Mammary epithelial cell (primary cell): ENCODE measurements at regions of chr10 and their contacts with region 1.

Region 1: GRCh38 chr10:22003079-22003913 is at the start of gene DNAJC1:
- DNase-seq: peak; percentile 92
- H3K4me3 ChIP-seq: peak within 1 kb of the TSS; percentile 70 to 96 (median 92)
- H3K27ac ChIP-seq: peak within 1 kb of the TSS; percentile 87
- H3K4me1 ChIP-seq: peaks cover 6% of the 10 kb centered on the region
- H3K27me3 ChIP-seq: peaks cover 3% of the 10 kb centered on the region
- CTCF ChIP-seq: no peak
- total RNA-seq, gene DNAJC1: 33.0 to 56.5 TPM

Region 2: DNA sequence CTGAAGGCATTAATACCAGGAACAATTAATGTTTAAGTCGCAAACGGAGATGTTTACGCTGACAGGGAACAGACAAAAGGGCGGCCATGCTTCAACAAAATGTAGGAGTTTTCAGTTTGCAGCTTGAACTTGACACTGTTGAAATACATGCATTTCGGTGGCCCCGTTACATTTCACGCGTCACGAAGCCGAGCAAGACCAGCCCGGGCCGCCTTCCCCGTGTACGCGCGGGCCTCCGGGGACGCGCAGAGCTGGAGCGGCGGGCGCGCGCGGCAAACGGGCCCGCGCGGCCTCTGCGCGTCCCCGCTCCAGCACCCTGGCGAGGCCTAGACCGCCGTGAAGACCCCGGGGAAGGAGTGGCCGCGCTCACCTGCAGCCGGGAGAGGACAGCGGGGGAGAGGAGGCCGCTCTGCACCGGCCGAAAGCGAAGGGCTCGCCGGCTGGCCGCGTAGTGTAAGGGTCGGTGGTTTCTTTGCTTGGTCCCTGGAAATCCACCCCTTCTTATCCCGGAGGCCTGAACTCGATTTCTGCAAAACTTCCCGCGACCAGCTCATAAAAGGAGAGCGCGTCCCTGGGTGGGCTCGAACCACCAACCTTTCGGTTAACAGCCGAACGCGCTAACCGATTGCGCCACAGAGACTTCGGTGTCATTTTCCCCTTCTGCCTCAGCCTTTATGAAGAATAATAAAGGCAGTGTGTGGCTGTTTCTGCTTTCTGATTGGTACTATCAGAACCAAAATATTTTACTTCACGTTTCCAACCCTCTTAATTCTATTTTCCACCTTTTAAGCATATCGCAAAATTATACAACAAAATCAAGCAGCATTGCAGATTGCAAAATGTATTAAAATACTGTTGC is 225.9 kb after region 1 on chr10:
- CTCF ChIA-PET with region 1: no interaction called
- dilution Hi-C with region 1: no loop called
- in situ Hi-C with region 1: no loop called
- intact Hi-C with region 1: loop called (anchors 2 kb)
- DNase-seq: peak; percentile 89
- H3K4me3 ChIP-seq: peak overlapping the region; percentile 74 to 90 (median 88)
- H3K27ac ChIP-seq: peak overlapping the region; percentile 15
- H3K4me1 ChIP-seq: no peaks in the 10 kb centered on the region
- H3K27me3 ChIP-seq: peaks cover 3% of the 10 kb centered on the region
- CTCF ChIP-seq: no peak

Region 3: GRCh38 chr10:22316285-22317120 is 313.2 kb after region 1 on chr10 and contains the start of gene COMMD3:
- CTCF ChIA-PET with region 1: no interaction called
- dilution Hi-C with region 1: no loop called
- in situ Hi-C with region 1: loop called in 1 of 2 experiments (anchors 10 kb)
- intact Hi-C with region 1: loop called (anchors 5 kb)
- DNase-seq: peak; percentile 84
- H3K4me3 ChIP-seq: peak within 1 kb of the TSS; percentile 75 to 92 (median 78)
- H3K27ac ChIP-seq: peak within 1 kb of the TSS; percentile 86
- H3K4me1 ChIP-seq: peaks cover 16% of the 10 kb centered on the region
- H3K27me3 ChIP-seq: no peaks in the 10 kb centered on the region
- CTCF ChIP-seq: no peak
- total RNA-seq, gene COMMD3: 26.7 to 48.5 TPM

Region 4: GRCh38 chr10:22427890-22428571 is 424.7 kb after region 1 on chr10:
- CTCF ChIA-PET with region 1: no interaction called
- dilution Hi-C with region 1: no loop called
- in situ Hi-C with region 1: loop called (anchors 10 kb)
- intact Hi-C with region 1: loop called (anchors 2 kb)
- DNase-seq: peak; percentile 90
- H3K4me3 ChIP-seq: no peak overlapping the region
- H3K27ac ChIP-seq: peak overlapping the region; percentile 82
- H3K4me1 ChIP-seq: peaks cover 31% of the 10 kb centered on the region
- H3K27me3 ChIP-seq: no peaks in the 10 kb centered on the region
- CTCF ChIP-seq: no peak

Region 5: DNA sequence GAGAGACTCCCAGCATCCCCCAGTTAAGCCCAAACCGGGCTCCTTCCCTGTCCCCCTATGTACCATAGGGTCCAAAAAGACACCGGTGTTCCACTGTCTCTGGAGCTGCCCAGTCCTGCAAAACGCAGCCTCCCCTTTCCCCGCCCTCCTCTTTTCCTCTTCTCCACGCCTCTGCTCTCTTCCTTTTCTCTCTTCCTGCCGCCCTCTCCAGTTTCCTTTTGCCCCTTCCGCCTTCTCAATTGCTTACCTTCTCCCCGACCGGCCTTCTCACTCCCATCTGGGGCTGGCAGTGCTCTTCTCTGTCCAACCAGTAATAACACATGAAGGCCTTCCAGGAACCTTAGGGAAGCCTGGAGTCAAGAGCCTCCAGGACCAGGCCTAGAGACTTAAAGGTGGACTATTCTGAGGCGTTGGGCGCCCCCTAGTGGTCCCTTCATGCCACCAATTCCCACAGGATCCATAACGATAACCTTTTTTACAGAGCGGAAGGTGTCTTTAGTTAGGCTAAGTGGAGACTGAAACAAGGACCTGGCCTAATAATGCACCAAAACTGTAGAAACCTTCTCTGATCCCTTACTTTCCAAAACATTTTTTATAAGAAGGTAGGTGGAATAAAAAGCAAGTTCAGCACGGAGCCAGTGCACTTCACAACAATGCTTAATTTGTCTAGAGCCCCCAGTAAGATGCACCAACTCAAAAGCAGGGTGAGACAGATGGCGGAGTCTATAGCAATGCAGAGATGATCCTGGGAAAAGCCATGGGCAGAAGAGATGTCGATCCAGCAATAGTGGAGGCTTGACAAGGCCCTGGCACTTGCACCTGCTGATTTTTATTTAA is 1064.9 kb after region 1 on chr10:
- CTCF ChIA-PET with region 1: interaction called, 3 read pairs
- dilution Hi-C with region 1: no loop called
- in situ Hi-C with region 1: no loop called
- intact Hi-C with region 1: loop called (anchors 5 kb)
- DNase-seq: peak; percentile 51
- H3K4me3 ChIP-seq: no peak overlapping the region
- H3K27ac ChIP-seq: no peak overlapping the region
- H3K4me1 ChIP-seq: no peaks in the 10 kb centered on the region
- H3K27me3 ChIP-seq: no peaks in the 10 kb centered on the region
- CTCF ChIP-seq: peak; percentile 78 to 90